ENCODE measurements at regions of chr11 and their contacts with region 1.

Region 1: GRCh38 chr11:67317205-67317887 is 14.0 kb downstream of the SSH3 start:
- DNase-seq: peak; percentile 94
- H3K4me3 ChIP-seq: peak overlapping the region; percentile 75 to 86 (median 79)
- H3K27ac ChIP-seq: peak overlapping the region; percentile 85
- H3K4me1 ChIP-seq: peaks cover 27% of the 10 kb centered on the region
- H3K27me3 ChIP-seq: no peaks in the 10 kb centered on the region
- CTCF ChIP-seq: peak; percentile 82 to 94

Region 2: GRCh38 chr11:67053896-67054842 is 263.2 kb before region 1 on chr11:
- CTCF ChIA-PET with region 1: no interaction called
- dilution Hi-C with region 1: no loop called
- in situ Hi-C with region 1: no loop called
- intact Hi-C with region 1: loop called (anchors 1 kb)
- DNase-seq: peak; percentile 57
- H3K4me3 ChIP-seq: no peak overlapping the region
- H3K27ac ChIP-seq: peak overlapping the region; percentile 99
- H3K4me1 ChIP-seq: peaks cover 42% of the 10 kb centered on the region
- H3K27me3 ChIP-seq: no peaks in the 10 kb centered on the region
- CTCF ChIP-seq: peak; percentile 89 to 95

Region 3: GRCh38 chr11:67230406-67230805 is 86.9 kb before region 1 on chr11:
- CTCF ChIA-PET with region 1: no interaction called
- dilution Hi-C with region 1: no loop called
- in situ Hi-C with region 1: no loop called
- intact Hi-C with region 1: no loop called
- DNase-seq: peak; percentile 14
- H3K4me3 ChIP-seq: no peak overlapping the region
- H3K27ac ChIP-seq: no peak overlapping the region
- H3K4me1 ChIP-seq: no peaks in the 10 kb centered on the region
- H3K27me3 ChIP-seq: no peaks in the 10 kb centered on the region
- CTCF ChIP-seq: no peak

Region 4: DNA sequence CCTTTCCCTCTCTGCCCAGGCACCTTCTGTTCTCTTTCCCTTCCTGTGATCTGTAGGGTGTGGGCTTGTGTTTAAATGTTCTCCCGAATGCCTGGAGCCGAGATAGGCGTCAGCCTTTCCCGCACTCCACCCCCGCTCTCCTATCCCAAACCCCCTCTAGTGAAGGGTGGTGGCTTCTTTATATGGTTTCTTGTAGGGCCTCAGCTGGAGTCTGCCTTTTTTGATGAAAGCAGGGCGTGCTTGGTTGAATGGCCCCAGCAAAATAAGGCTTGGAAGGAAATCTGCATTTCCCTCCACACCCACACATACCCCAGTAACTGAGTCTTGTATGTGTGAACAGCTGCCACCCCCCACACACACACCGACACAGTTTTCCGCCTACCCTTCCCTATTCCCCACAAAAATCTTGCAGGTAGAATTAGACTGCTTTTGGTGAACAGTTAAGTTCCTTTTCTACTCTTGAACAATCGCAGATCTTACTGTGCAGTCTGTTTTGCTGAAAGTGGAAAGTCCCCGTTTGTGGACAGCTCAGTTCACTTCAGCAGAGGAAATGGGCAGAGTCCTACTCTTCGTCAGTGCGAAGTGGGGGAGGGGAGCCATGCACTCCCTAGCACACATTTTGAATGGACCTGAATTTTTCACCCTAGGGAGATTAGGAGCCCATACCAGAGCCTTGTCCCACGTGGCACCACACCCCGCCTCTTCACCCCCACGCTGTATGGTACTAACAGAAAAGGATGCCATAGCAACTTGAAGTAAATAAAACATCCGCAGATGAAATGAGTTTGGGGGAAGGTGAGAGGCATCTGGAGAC is 76.6 kb before region 1 on chr11:
- CTCF ChIA-PET with region 1: no interaction called
- dilution Hi-C with region 1: no loop called
- in situ Hi-C with region 1: no loop called
- intact Hi-C with region 1: no loop called
- DNase-seq: peak; percentile 85
- H3K4me3 ChIP-seq: peak overlapping the region; percentile 58 to 85 (median 65)
- H3K27ac ChIP-seq: peak overlapping the region; percentile 96
- H3K4me1 ChIP-seq: peaks cover 24% of the 10 kb centered on the region
- H3K27me3 ChIP-seq: no peaks in the 10 kb centered on the region
- CTCF ChIP-seq: no peak

Region 5: GRCh38 chr11:67252831-67253239 is 64.5 kb before region 1 on chr11:
- CTCF ChIA-PET with region 1: interaction called, 4 read pairs
- dilution Hi-C with region 1: loop called (anchors 10 kb)
- in situ Hi-C with region 1: no loop called
- intact Hi-C with region 1: loop called (anchors 1 kb)
- DNase-seq: peak; percentile 49
- H3K4me3 ChIP-seq: no peak overlapping the region
- H3K27ac ChIP-seq: peak overlapping the region; percentile 34
- H3K4me1 ChIP-seq: peaks cover 32% of the 10 kb centered on the region
- H3K27me3 ChIP-seq: no peaks in the 10 kb centered on the region
- CTCF ChIP-seq: peak; percentile 70 to 80

Region 6: DNA sequence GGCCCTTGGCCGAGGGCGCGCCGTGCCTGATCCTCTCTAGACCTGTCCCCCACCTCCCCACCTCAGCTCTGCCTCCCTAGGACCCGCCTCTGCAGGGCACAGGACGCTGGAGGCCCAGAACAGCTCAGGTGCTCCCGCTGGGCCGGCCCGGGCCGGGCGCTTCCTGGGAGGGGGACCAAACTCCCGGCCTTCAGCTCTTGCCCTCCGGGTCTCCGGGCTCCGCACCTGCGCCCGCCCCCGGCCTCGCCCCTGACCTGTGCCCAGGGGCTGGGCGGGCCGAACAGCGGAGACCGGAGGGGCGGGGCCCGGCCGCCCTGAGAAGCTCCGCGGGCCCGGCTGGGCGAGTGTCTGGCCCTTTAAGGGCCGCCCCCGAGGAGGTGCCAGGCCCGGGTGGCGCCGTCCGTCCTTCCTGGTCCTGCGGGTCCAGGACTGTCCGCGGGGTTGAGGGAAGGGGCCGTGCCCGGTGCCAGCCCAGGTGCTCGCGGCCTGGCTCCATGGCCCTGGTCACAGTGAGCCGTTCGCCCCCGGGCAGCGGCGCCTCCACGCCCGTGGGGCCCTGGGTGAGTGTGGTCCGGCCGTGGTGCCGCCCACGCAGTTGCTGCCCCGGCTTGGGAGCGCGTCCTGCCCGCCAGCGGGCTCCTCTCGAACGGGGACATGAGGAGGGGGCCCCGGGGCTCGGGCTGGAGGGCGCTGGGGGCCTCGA is 14.1 kb before region 1 on chr11 and contains the start of gene SSH3:
- CTCF ChIA-PET with region 1: interaction called, 15 read pairs
- dilution Hi-C with region 1: no loop called
- in situ Hi-C with region 1: no loop called
- intact Hi-C with region 1: loop called (anchors 1 kb)
- DNase-seq: peak; percentile 70
- H3K4me3 ChIP-seq: peak within 1 kb of the TSS; percentile 81 to 96 (median 89)
- H3K27ac ChIP-seq: peak within 1 kb of the TSS; percentile 30
- H3K4me1 ChIP-seq: peaks cover 18% of the 10 kb centered on the region
- H3K27me3 ChIP-seq: no peaks in the 10 kb centered on the region
- CTCF ChIP-seq: no peak
- total RNA-seq, gene SSH3: 47.0 to 86.9 TPM

Region 7: DNA sequence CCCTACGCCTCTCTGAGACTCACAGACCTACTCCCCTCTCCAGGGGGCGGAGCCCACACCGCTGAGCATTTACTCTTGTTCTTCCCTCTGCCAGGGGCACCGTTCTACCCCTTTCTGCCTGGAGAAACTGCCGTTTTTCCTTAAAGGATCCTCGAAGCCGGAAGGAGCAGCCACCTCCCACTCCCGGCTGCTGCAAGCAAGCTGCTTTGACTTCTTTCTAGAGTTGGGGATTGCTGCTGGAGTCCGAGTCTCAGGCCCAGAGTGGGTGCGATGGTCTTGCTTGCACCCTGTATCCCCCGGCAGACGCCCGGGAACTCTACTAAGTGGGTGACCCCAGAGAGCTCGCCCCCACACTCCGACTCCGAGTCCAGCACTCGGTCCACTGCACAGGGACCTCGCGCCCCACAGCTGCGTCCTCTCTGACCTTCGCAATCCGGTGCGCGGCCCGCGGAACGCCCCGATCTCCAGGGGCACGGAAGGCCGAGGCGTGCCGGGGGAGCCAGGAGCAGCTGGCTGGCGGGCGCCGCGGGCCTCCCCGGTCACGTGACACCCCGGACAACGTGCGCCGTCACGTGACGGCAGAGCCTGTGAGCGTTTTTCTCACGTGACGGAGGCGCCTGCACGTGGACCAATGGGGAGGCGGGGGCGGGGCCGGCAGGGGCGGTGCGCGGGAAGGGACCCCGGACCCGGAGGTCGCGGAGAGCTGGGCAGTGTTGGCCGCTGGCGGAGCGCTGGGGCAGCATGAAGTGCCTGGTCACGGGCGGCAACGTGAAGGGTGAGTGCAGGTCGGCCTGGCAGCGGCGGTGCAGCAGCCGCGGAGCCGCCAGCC is 74.2 kb after region 1 on chr11 and contains the start of gene RAD9A:
- CTCF ChIA-PET with region 1: no interaction called
- dilution Hi-C with region 1: loop called (anchors 5 kb)
- in situ Hi-C with region 1: no loop called
- intact Hi-C with region 1: no loop called
- DNase-seq: peak; percentile 89
- H3K4me3 ChIP-seq: peak within 1 kb of the TSS; percentile 74 to 78 (median 77)
- H3K27ac ChIP-seq: peak within 1 kb of the TSS; percentile 75
- H3K4me1 ChIP-seq: peaks cover 6% of the 10 kb centered on the region
- H3K27me3 ChIP-seq: no peaks in the 10 kb centered on the region
- CTCF ChIP-seq: no peak
- total RNA-seq, gene RAD9A: 6.5 to 17.2 TPM

Measured in mammary epithelial cell (primary cell).